HCT116 (cell line): ENCODE measurements at regions of chr19 and their contacts with region 1.

Region 1: GRCh38 chr19:12789904-12790619 is 1.2 kb upstream of the JUNB start:
- DNase-seq: peak; percentile 89
- ATAC-seq: peak; percentile 52
- H3K4me3 ChIP-seq: peak overlapping the region; percentile 77 to 84
- H3K27ac ChIP-seq: peak overlapping the region; percentile 96
- H3K4me1 ChIP-seq: peaks cover 64 to 92% of the 10 kb centered on the region in 2 experiments
- H3K27me3 ChIP-seq: no peaks in the 10 kb centered on the region
- CTCF ChIP-seq: no peak
- POLR2A ChIP-seq: no peak
- RAD21 ChIP-seq: no peak

Region 2: GRCh38 chr19:12722566-12723380 is 67.3 kb before region 1 on chr19:
- CTCF ChIA-PET with region 1: interaction called, 6 read pairs
- POLR2A ChIA-PET with region 1: interaction called, 32 read pairs
- RAD21 ChIA-PET with region 1: no interaction called
- intact Hi-C with region 1: no loop called
- DNase-seq: peak; percentile 99
- ATAC-seq: peak; percentile 83
- H3K4me3 ChIP-seq: peak overlapping the region; percentile 82 to 93
- H3K27ac ChIP-seq: peak overlapping the region; percentile 88
- H3K4me1 ChIP-seq: peaks cover 0 to 41% of the 10 kb centered on the region in 2 experiments; a peak in 3 of 4 replicates
- H3K27me3 ChIP-seq: no peaks in the 10 kb centered on the region
- CTCF ChIP-seq: no peak
- POLR2A ChIP-seq: peak; percentile 54
- RAD21 ChIP-seq: no peak

Region 3: DNA sequence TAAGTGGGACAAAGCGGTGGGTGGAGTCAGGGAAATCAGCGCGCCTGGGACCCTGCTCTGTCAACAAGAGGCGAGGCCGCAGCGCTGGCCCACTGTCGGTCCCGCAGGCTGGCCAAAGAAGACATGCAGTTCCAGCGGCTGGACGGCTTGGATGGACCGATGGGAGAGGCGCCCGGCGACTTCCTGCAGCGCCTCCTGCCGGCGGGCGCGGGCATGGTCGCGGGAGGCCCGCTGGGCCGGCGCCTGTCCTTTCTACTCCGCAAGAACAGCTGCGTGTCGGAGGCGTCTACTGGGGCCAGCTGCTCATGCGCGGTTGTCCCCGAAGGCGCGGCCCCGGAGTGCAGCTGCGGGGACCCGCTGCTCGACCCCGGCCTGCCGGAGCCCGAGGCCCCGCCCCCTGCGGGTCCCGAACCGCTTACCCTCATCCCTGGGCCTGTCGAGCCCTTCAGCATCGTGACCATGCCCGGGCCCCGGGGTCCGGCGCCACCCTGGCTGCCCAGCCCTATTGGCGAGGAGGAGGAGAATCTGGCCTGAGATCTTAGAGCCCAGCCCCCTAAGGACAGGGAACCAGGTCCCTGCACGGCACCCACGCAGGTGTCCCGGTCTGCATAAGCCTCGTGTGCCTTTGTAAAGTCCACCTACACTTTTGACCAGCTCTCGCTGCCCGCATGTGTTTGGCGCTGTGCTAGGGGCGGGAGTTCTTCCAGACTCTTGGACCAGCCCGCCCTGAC is 32.4 kb before region 1 on chr19:
- CTCF ChIA-PET with region 1: interaction called, 87 read pairs
- POLR2A ChIA-PET with region 1: interaction called, 98 read pairs
- RAD21 ChIA-PET with region 1: no interaction called
- intact Hi-C with region 1: no loop called
- DNase-seq: peak; percentile 52
- ATAC-seq: peak; percentile 87
- H3K4me3 ChIP-seq: peak overlapping the region; percentile 33 to 55
- H3K27ac ChIP-seq: peak overlapping the region; percentile 31; the same call in 1 of the 2 replicates
- H3K4me1 ChIP-seq: peaks cover 4 to 13% of the 10 kb centered on the region in 2 experiments; a peak in 3 of 4 replicates
- H3K27me3 ChIP-seq: no peaks in the 10 kb centered on the region
- CTCF ChIP-seq: peak; percentile 72 to 94 (median 88)
- POLR2A ChIP-seq: no peak
- RAD21 ChIP-seq: peak; percentile 64

Region 4: GRCh38 chr19:12777217-12778016 is 12.6 kb before region 1 on chr19:
- CTCF ChIA-PET with region 1: interaction called, 88 read pairs
- POLR2A ChIA-PET with region 1: interaction called, 172 read pairs
- RAD21 ChIA-PET with region 1: interaction called, 5 to 12 read pairs
- intact Hi-C with region 1: loop called (anchors 2 kb)
- DNase-seq: no peak
- ATAC-seq: peak; percentile 41
- H3K4me3 ChIP-seq: peak overlapping the region; percentile 66 to 68
- H3K27ac ChIP-seq: peak overlapping the region; percentile 96
- H3K4me1 ChIP-seq: peaks cover 49 to 77% of the 10 kb centered on the region in 2 experiments
- H3K27me3 ChIP-seq: no peaks in the 10 kb centered on the region
- CTCF ChIP-seq: peak; percentile 87 to 95 (median 94); a peak in 5 of 6 replicates
- POLR2A ChIP-seq: no peak
- RAD21 ChIP-seq: peak; percentile 93

Region 5: DNA sequence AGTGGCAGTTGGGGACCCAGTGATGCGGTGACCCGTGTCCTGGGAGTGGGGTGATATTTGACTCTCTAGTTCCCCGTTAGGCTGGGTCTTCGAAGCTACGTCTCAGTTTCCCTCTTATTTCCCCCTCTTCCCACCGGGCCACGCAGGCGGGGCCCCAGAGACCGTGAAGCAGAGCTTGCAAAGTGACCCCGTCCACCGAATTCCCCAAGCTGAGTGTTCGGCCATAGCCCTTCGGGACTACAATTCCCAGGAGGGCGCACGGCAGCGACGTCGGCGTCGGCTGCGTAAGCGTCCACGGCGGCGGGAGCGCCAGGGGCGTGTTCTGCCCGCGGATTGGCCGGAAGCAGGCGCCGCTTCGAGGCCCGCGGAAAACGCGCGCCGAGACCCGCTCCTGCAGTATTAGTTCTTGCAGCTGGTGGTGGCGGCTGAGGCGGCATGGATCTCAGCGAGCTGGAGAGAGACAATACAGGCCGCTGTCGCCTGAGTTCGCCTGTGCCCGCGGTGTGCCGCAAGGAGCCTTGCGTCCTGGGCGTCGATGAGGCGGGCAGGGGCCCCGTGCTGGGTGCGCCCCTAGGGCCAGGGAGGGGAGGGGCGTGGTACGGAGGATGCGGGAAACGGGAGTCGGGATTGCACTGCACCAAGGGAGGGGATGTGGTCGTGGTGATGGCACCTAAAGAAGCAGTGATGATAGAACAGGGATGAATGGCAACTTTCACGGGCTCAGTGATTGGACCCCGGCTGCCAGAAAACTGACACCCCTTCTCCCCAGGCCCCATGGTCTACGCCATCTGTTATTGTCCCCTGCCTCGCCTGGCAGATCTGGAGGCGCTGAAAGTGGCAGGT is 16.4 kb after region 1 on chr19 and contains the start of gene RNASEH2A:
- CTCF ChIA-PET with region 1: no interaction called
- POLR2A ChIA-PET with region 1: interaction called, 19 read pairs
- RAD21 ChIA-PET with region 1: no interaction called
- intact Hi-C with region 1: no loop called
- DNase-seq: peak; percentile 71
- ATAC-seq: peak; percentile 86
- H3K4me3 ChIP-seq: peak within 1 kb of the TSS; percentile 82 to 89
- H3K27ac ChIP-seq: peak within 1 kb of the TSS; percentile 72
- H3K4me1 ChIP-seq: peaks cover 14 to 26% of the 10 kb centered on the region in 2 experiments; a peak in 3 of 4 replicates
- H3K27me3 ChIP-seq: no peaks in the 10 kb centered on the region
- CTCF ChIP-seq: no peak
- POLR2A ChIP-seq: peak; percentile 83
- RAD21 ChIP-seq: no peak
- total RNA-seq, gene RNASEH2A: 54.5 TPM

Region 6: DNA sequence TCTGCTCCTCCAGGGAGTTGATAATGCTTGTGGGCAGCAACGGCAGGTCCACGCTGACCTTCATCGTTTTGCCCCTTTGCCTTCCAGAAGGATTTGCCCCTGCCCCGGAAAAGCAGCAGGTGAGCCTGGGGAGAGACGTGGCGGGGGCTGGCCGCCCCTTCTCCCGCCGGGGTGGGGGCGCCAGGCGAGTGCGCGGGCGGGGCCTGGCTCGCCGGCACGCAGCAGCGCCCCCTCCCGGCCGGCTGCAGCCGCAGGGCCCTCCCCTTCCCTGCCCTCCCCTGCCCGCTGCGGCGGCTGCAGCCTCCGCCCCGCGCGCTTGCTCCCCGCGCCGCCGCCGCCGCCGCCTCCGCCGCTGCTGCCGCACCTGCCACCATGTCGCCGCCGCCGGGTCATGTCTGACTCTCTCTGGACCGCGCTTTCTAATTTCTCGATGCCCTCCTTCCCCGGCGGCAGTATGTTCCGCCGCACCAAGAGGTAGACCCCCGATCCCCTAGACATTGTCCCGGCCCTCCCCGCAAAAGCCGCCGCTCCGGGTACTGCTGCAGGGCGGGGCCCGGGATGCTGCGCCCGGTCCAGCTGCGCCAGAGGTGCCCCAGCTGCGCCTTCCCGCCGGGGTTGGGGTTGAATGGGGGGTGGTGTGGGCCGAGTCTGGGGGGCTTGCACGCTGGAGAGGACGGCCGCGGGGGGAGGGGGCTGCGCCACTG is 48.3 kb after region 1 on chr19 and contains the start of gene MAST1:
- CTCF ChIA-PET with region 1: no interaction called
- POLR2A ChIA-PET with region 1: interaction called, 14 read pairs
- RAD21 ChIA-PET with region 1: no interaction called
- intact Hi-C with region 1: no loop called
- DNase-seq: no peak
- ATAC-seq: peak; percentile 50
- H3K4me3 ChIP-seq: peak within 1 kb of the TSS; percentile 61 to 88
- H3K27ac ChIP-seq: peak within 1 kb of the TSS; percentile 69
- H3K4me1 ChIP-seq: peaks cover 39 to 67% of the 10 kb centered on the region in 2 experiments
- H3K27me3 ChIP-seq: no peaks in the 10 kb centered on the region
- CTCF ChIP-seq: peak in 2 of 3 experiments; percentile 45 to 53; a peak in 4 of 6 replicates
- POLR2A ChIP-seq: no peak
- RAD21 ChIP-seq: no peak
- total RNA-seq, gene MAST1: 28.9 TPM